ENCODE measurements at regions of chr4 and their contacts with region 1.

Region 1: DNA sequence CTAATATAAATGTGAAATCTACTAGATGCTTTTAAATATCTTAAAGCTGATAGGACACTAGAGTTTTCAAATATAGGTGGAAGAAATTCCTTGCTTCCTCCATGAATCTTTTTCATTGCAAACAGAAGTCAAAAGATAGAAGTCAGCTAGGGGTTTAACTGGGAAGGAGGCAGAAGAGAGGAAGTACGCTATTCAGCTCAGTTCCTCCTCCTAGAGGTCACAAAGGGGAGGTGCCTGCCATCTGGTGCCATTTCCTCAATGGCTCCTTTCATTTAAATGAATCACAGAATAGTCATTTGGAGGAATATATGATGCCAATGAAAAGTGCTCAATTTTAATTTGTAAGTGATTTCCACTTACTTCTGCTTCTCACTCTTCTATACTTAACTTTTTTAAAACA is 8.5 kb downstream of the COL25A1 start:
- DNase-seq: peak; percentile 46
- H3K4me3 Mint-ChIP-seq: no peak overlapping the region
- H3K27ac Mint-ChIP-seq: no peak overlapping the region
- H3K4me1 Mint-ChIP-seq: no peaks in the 10 kb centered on the region
- H3K27me3 Mint-ChIP-seq: peaks cover 12% of the 10 kb centered on the region

Region 2: GRCh38 chr4:108834835-108835384 is 459.1 kb before region 1 on chr4:
- CTCF ChIA-PET with region 1: interaction called, 16 read pairs
- DNase-seq: no peak
- H3K4me3 Mint-ChIP-seq: no peak overlapping the region
- H3K27ac Mint-ChIP-seq: no peak overlapping the region
- H3K4me1 Mint-ChIP-seq: peaks cover 28% of the 10 kb centered on the region
- H3K27me3 Mint-ChIP-seq: peaks cover 13% of the 10 kb centered on the region